ENCODE measurements at regions of chr3 and their contacts with region 1.

Region 1: DNA sequence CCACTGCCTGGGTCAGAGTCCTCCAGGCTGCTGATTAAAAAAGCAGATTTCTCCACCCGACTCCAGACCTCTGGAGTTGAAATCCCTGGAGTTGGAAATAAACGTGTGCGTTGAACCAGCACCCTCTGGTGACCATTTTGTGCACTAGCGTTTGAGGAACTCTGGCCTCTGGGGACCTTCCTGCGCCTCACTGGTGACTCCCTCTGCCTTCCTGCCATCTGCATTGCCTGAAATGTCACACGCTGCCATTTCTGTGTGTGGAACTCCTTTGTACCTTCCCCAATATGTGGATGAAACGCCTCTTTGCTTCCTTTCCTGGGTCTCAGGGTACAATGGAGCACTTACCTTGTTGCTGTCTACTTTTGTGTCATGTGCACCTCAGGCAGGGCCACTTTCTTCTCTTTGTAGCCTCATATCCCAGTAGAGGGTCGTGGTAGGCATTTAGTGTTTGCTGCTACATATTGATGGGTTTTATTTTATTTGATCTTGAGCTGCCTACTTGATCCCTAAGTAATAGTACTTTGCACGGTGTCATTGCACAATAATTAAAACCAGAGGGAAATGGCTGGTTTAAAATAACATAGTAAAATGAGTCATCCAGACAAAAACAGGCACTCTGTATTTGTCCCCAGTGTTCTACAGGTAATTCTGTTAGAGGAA is 56.8 kb downstream of the GPR171 start:
- DNase-seq: peak; percentile 43 to 71
- ATAC-seq: peak; percentile 85 to 97 (median 94)
- H3K4me3 ChIP-seq: peak overlapping the region in 1 of 10 donors; percentile 5
- H3K27ac ChIP-seq: no peak overlapping the region
- H3K4me1 ChIP-seq: peaks cover 0 to 14% (median 9%) of the 10 kb centered on the region in 9 donors
- H3K27me3 ChIP-seq: no peaks in the 10 kb centered on the region
- CTCF ChIP-seq: peak; percentile 81 to 96 (median 88)

Region 2: DNA sequence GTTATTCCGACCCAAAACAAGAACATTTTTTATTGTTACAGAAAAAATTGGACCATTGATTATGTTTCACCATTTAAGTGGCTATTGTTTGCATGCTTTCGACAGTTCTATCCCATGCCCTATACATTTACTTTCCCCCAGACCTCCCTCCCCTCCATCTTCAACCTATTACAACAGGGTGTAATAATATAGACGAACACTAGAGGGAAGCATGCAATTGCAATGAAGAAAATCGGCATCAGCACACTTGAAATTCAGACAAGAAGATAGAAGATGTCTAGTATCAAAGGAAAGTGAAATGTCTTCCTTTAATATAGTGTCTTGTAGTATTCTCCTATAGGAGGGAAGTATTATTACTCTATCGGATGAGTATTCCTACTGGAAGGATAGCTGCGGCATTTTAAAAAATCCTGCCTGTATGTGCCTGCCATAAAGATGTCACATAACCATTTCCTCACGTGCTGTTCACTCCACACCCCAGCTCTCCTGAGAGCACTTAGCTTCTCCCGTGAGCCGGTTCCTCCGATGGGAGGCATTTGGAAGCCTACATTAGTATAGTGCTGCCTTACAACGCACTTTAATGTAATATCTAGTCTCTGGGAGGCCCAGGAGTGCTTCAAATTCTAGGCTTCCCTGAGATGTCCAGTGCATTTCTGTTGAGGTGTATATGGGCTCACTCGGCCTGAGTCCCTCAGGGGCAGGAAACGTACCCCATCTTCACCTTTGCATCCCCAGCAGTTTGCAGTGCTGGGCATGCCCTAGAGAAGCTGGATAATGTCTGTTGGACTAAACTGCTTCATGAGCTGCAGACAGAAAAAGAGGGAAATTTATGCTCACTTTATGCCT is 424.7 kb before region 1 on chr3:
- intact Hi-C with region 1: loop called (anchors 1 to 10 kb)
- DNase-seq: no peak
- ATAC-seq: peak in 7 of 8 donors; percentile 51 to 79 (median 73)
- H3K4me3 ChIP-seq: no peak overlapping the region
- H3K27ac ChIP-seq: no peak overlapping the region
- H3K4me1 ChIP-seq: peaks cover 0 to 8% (median 4%) of the 10 kb centered on the region in 9 donors
- H3K27me3 ChIP-seq: no peaks in the 10 kb centered on the region
- CTCF ChIP-seq: peak; percentile 75 to 87 (median 83)

Region 3: DNA sequence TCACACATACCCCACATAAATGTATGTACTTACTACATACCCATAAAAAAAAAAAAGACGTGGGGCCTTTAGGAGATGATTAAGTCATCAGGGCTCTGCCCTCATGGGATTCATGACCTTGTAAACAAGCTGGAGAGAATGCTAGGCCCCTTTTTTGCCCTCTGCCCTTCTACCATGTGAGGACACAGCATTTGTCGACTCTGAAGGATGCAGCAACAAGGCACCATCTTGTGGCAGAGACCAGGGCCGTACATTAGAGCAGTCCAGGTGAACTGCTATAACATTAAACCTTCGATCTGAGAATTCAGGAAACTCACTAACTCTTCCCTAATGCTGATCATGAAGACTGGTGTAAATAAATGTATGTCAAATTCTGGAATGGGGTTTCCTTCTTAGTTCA is 352.6 kb before region 1 on chr3:
- intact Hi-C with region 1: loop called in 8 of 10 experiments (anchors 1 to 10 kb)
- DNase-seq: no peak
- ATAC-seq: no peak
- H3K4me3 ChIP-seq: no peak overlapping the region
- H3K27ac ChIP-seq: no peak overlapping the region
- H3K4me1 ChIP-seq: peaks cover 0 to 4% (median 0%) of the 10 kb centered on the region in 9 donors
- H3K27me3 ChIP-seq: peaks cover 0 to 3% (median 0%) of the 10 kb centered on the region in 7 donors
- CTCF ChIP-seq: no peak

Region 4: GRCh38 chr3:150925751-150926201 is 220.4 kb before region 1 on chr3:
- intact Hi-C with region 1: loop called in 8 of 10 experiments (anchors 2 to 10 kb)
- DNase-seq: peak; percentile 19 to 34
- ATAC-seq: peak in 5 of 8 donors; percentile 55 to 80 (median 74)
- H3K4me3 ChIP-seq: peak overlapping the region in 5 of 10 donors; percentile 22 to 34 (median 28)
- H3K27ac ChIP-seq: no peak overlapping the region
- H3K4me1 ChIP-seq: peaks cover 0 to 8% (median 0%) of the 10 kb centered on the region in 9 donors
- H3K27me3 ChIP-seq: peaks cover 0 to 4% (median 0%) of the 10 kb centered on the region in 7 donors
- CTCF ChIP-seq: peak in 8 of 9 donors; percentile 22 to 63 (median 56)

Region 5: DNA sequence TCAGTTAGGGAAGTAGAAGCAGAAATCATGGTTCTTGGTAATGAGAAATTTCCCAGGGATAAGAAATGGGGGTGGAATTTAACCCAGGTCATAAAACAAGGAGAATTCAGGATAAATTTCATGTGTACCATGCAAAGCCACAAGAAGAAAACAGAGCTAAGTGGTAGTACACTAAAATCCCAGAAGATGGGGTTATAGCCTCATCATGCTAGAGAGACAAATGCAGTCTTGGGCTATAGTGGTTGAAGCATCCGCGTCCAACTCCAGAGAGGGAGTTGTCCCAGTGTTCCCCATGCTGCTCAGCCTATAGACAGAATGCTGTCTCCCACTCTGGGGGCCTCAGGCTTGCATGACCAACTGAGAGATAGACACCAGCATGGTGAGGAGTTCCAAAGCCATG is 137.5 kb before region 1 on chr3:
- intact Hi-C with region 1: loop called in 1 of 10 experiments (anchors 10 kb)
- DNase-seq: no peak
- ATAC-seq: no peak
- H3K4me3 ChIP-seq: no peak overlapping the region
- H3K27ac ChIP-seq: no peak overlapping the region
- H3K4me1 ChIP-seq: no peaks in the 10 kb centered on the region
- H3K27me3 ChIP-seq: peaks cover 0 to 18% (median 0%) of the 10 kb centered on the region in 7 donors
- CTCF ChIP-seq: peak in 4 of 9 donors; percentile 7 to 35 (median 16)

Measured in heart right ventricle (tissue), 16 donors.